ENCODE measurements at regions of chr4 and their contacts with region 1.

Region 1: GRCh38 chr4:105140684-105141490 is 5.8 kb upstream of the TET2 start:
- DNase-seq: no peak
- H3K4me3 ChIP-seq: no peak overlapping the region
- CTCF ChIP-seq: peak; percentile 55

Region 2: GRCh38 chr4:105128208-105128607 is 12.7 kb before region 1 on chr4:
- CTCF ChIA-PET with region 1: interaction called, 12 read pairs
- POLR2A ChIA-PET with region 1: interaction called, 3 read pairs
- DNase-seq: no peak
- H3K4me3 ChIP-seq: no peak overlapping the region
- CTCF ChIP-seq: no peak

Region 3: DNA sequence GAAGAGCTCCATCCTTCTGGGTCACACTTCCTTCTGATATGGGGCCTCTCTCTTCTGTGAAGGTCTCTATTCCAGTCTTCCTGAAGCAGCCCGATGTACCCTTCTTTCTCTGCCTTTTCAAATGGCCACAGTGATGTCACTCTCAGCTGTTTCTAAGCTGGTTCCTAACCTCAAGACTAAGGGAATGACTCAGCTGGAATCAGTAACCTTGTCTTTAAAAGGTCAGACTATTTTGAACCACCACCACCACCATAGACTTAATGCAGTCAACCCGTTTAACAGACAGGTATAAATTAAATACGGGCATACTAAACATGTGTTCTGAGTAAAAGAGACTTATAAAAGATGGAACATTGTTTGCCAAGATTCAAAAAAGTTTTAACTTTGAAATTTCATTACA is 211.9 kb after region 1 on chr4:
- CTCF ChIA-PET with region 1: no interaction called
- POLR2A ChIA-PET with region 1: no interaction called
- DNase-seq: no peak
- H3K4me3 ChIP-seq: no peak overlapping the region
- CTCF ChIP-seq: no peak